ENCODE measurements at regions of chr7 and their contacts with region 1.

Region 1: GRCh38 chr7:19754521-19755116 is 18.8 kb downstream of the TMEM196 start:
- DNase-seq: peak; percentile 11 to 34 (median 12)
- ATAC-seq: no peak; the same call in 2 of the 3 replicates
- H3K4me3 ChIP-seq: no peak overlapping the region
- H3K27ac ChIP-seq: no peak overlapping the region
- H3K4me1 ChIP-seq: no peaks in the 10 kb centered on the region
- H3K27me3 ChIP-seq: no peaks in the 10 kb centered on the region
- CTCF ChIP-seq: peak; percentile 36 to 71 (median 47); a peak in 4 of 6 replicates
- EP300 ChIP-seq: no peak
- POLR2A ChIP-seq: no peak
- RAD21 ChIP-seq: peak; percentile 55 to 68

Region 2: GRCh38 chr7:20172736-20173334 is 418.2 kb after region 1 on chr7:
- CTCF ChIA-PET with region 1: interaction called, 5 read pairs
- POLR2A ChIA-PET with region 1: no interaction called
- in situ Hi-C with region 1: loop called (anchors 25 kb)
- intact Hi-C with region 1: loop called (anchors 5 kb)
- DNase-seq: peak; percentile 20 to 65 (median 44)
- ATAC-seq: peak; percentile 95
- H3K4me3 ChIP-seq: no peak overlapping the region
- H3K27ac ChIP-seq: no peak overlapping the region
- H3K4me1 ChIP-seq: no peaks in the 10 kb centered on the region
- H3K27me3 ChIP-seq: no peaks in the 10 kb centered on the region
- CTCF ChIP-seq: peak; percentile 53 to 69 (median 64)
- EP300 ChIP-seq: no peak
- POLR2A ChIP-seq: no peak
- RAD21 ChIP-seq: peak; percentile 24 to 57; a peak in 2 of 4 replicates

Region 3: GRCh38 chr7:20330240-20330927 is 575.8 kb after region 1 on chr7 and contains the start of gene ITGB8:
- CTCF ChIA-PET with region 1: no interaction called
- POLR2A ChIA-PET with region 1: no interaction called
- in situ Hi-C with region 1: loop called (anchors 25 kb)
- intact Hi-C with region 1: no loop called
- DNase-seq: peak; percentile 44 to 73 (median 58)
- ATAC-seq: peak; percentile 90
- H3K4me3 ChIP-seq: peak within 1 kb of the TSS; percentile 54
- H3K27ac ChIP-seq: peak within 1 kb of the TSS; percentile 57; the same call in 2 of the 3 replicates
- H3K4me1 ChIP-seq: peaks cover 4 to 18% of the 10 kb centered on the region in 2 experiments; a peak in 3 of 5 replicates
- H3K27me3 ChIP-seq: peaks cover 0 to 8% of the 10 kb centered on the region in 2 experiments; a peak in 1 of 5 replicates
- CTCF ChIP-seq: no peak
- EP300 ChIP-seq: no peak
- POLR2A ChIP-seq: no peak
- RAD21 ChIP-seq: no peak
- polyA plus RNA-seq, gene ITGB8: not detected

Measured in K562 (cell line).